ENCODE measurements at regions of chr11 and their contacts with region 1.

Region 1: DNA sequence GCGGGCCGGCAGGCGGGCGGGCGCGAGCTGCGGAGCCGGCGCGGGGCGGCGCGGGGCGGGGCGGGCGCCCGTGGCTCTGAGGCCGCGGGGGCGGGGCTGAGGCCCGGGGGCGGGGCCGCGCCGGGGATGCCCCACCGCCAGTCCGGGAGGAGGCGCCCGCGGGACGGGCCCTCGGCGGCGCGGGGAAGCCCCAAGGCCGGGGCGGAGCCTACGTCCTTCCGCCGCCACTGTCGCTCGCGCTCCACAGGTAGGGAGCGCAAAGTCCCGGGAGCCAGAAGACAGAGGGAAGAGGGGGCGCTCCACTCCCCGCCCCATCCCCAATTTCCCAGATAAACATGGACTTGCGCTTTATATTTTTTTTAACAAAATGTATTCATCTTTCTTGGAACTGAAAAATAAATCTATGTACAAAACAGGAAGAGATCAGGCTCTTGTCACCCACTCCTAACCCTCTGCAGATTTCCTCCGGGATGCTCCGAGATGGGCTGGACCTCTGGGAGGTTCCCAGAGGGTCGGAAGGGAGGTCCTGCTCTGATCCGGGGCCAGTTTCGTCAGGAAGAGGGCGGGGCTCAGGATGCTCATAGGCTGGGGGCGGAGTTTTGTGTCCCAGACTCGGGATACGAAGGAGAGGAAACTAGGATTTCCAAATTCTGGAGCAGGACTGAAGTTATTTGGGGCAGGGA is at the start of gene MAP4K2:
- DNase-seq: peak; percentile 77 to 85
- ATAC-seq: peak; percentile 80 to 89
- H3K4me3 ChIP-seq: peak within 1 kb of the TSS; percentile 61
- H3K27ac ChIP-seq: peak within 1 kb of the TSS; percentile 77 to 89
- H3K4me1 ChIP-seq: peaks cover 23% of the 10 kb centered on the region
- CTCF ChIP-seq: peak; percentile 34; the same call in 2 of the 3 replicates
- EP300 ChIP-seq: no peak
- POLR2A ChIP-seq: no peak
- RAD21 ChIP-seq: 0 out of 5 replicates have a peak, but pooled peaks of 1 of the 2 experiments have one; percentile 19
- polyA plus RNA-seq, gene MAP4K2: 9.4 and 10.2 TPM in 2 replicates

Region 2: DNA sequence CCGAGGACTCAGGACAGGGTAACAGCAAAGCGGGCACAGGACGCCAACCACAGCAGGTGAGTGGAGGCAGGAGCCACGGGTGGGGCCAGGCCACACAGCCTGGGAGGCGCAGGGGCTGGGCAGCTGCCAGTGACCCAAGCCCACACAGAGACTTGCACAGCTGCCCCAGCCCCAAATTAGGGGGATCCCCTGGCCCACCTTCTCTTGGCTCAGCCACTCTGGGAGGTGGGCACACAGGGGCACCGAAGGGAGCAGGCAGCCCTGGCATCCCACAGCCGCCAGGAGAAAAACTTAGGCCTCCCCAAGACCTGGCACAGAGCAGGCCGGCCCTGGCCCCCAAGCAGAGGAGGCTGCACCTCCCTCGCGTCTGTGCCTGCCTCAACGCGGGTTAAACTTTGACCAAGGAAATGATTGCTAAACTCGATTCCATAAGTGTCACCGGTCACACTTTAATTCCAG is 212.5 kb before region 1 on chr11 and contains the start of gene SLC22A12:
- CTCF ChIA-PET with region 1: no interaction called
- POLR2A ChIA-PET with region 1: no interaction called
- DNase-seq: no peak
- ATAC-seq: peak in 1 of 2 experiments; percentile 28; a peak in 2 of 6 replicates
- H3K4me3 ChIP-seq: no peak within 1 kb of the TSS
- H3K27ac ChIP-seq: no peak within 1 kb of the TSS
- H3K4me1 ChIP-seq: no peaks in the 10 kb centered on the region
- CTCF ChIP-seq: no peak
- EP300 ChIP-seq: no peak
- POLR2A ChIP-seq: no peak
- RAD21 ChIP-seq: no peak
- polyA plus RNA-seq, gene SLC22A12: not detected in 2 replicates

Region 3: DNA sequence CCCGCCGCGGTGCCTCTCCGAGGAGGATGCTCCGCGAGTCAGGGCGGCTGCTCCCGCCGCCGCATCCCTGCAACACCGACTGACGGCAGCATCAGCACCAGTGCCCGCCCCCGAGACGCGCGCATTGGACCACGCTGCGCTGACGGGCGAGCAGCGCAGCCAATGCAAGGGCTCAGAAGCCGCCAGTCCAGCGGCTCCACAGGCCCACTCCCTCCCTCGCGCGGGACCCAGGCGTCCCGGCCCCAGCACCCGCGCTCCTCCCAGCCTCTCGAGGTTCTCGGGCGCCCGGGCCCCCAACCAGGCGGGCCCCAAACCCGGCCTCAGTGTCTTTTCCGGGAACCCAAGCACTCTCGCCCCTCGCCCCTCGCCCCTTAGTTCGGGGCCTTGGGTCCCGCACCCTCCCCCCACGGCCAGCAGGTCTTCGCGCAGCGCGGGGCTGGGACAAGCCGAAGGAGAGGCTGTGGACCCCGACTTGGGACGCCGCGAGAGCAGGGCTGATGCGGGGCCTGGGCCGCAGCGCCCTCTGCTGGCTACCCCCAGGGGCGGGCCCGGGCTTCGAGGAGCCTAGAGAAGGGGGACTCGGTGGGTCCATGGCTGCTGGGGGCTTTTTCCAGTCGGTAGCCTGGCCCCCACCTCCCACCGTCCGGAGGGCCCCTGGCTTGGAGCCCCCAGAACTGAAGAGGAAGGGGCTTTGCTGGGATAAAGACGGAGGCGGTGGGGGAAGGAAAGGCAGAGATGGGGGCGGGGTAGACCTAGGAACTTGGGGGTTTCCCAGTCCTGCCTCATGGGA is 80.0 kb before region 1 on chr11 and contains the start of gene NRXN2:
- CTCF ChIA-PET with region 1: no interaction called
- POLR2A ChIA-PET with region 1: no interaction called
- DNase-seq: peak; percentile 88 to 98
- ATAC-seq: peak; percentile 90 to 98
- H3K4me3 ChIP-seq: peak within 1 kb of the TSS; percentile 94
- H3K27ac ChIP-seq: peak within 1 kb of the TSS; percentile 88 to 95
- H3K4me1 ChIP-seq: peaks cover 18% of the 10 kb centered on the region; the same call in 2 of the 3 replicates
- CTCF ChIP-seq: peak; percentile 96
- EP300 ChIP-seq: no peak
- POLR2A ChIP-seq: no peak
- RAD21 ChIP-seq: peak; percentile 54 to 75; a peak in 4 of 5 replicates
- polyA plus RNA-seq, gene NRXN2: not detected in 2 replicates

Region 4: DNA sequence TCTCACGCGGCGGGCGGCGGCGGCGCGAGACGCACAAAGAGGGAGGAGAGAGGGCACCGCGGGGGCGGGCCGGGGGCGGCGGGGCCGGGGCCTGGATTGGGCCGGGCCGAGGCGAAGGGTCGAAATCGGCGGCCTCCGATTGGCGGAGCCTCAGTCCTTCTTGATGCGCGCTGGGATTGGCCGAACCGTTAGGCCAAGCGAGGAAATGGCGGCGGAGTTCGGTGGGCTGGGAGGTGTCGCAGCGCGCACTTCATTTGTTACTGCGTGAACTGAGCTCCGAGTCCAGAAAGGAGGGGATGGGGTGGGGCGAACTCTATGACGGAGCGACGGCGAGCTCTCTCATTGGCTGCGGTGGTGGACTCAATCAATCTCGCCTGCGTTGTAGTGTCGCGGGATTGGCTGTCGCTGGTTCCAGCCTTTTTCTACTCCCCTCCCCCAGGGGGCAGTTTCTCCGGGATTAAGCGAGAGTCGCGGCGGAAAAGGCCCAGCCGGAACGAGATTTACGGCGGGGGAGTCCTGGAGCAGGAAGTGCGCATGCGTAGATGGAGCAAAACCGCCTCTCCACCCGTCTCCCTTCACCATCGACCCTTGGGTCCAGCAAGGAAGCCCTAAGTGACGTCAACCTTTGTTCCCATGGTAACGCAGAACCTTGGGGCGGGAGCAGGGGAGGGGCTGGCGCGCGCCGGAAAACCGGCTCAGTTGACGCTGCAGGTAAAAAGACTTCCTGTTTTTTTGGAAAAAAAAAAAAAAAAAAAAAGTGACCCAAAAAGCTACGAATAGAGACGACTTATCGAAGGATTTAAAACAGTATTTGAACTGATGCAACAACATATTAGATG is 24.6 kb before region 1 on chr11 and contains the start of gene SF1:
- CTCF ChIA-PET with region 1: interaction called, 79 read pairs
- POLR2A ChIA-PET with region 1: interaction called, 11 read pairs
- DNase-seq: peak; percentile 99 to 100
- ATAC-seq: peak; percentile 91 to 96
- H3K4me3 ChIP-seq: peak within 1 kb of the TSS; percentile 90
- H3K27ac ChIP-seq: peak within 1 kb of the TSS; percentile 98 to 99
- H3K4me1 ChIP-seq: peaks cover 32% of the 10 kb centered on the region
- CTCF ChIP-seq: no peak
- EP300 ChIP-seq: no peak
- POLR2A ChIP-seq: peak; percentile 61
- RAD21 ChIP-seq: no peak
- polyA plus RNA-seq, gene SF1: 88.8 and 104 TPM in 2 replicates

Region 5: GRCh38 chr11:64787526-64788320 is 15.6 kb before region 1 on chr11:
- CTCF ChIA-PET with region 1: interaction called, 79 read pairs
- POLR2A ChIA-PET with region 1: no interaction called
- DNase-seq: peak; percentile 72 to 89
- ATAC-seq: peak; percentile 74 to 93
- H3K4me3 ChIP-seq: no peak overlapping the region
- H3K27ac ChIP-seq: peak overlapping the region in 1 of 2 experiments; percentile 39; a peak in 1 of 6 replicates
- H3K4me1 ChIP-seq: no peaks in the 10 kb centered on the region
- CTCF ChIP-seq: peak; percentile 81
- EP300 ChIP-seq: no peak
- POLR2A ChIP-seq: no peak
- RAD21 ChIP-seq: peak; percentile 75 to 84

Region 6: DNA sequence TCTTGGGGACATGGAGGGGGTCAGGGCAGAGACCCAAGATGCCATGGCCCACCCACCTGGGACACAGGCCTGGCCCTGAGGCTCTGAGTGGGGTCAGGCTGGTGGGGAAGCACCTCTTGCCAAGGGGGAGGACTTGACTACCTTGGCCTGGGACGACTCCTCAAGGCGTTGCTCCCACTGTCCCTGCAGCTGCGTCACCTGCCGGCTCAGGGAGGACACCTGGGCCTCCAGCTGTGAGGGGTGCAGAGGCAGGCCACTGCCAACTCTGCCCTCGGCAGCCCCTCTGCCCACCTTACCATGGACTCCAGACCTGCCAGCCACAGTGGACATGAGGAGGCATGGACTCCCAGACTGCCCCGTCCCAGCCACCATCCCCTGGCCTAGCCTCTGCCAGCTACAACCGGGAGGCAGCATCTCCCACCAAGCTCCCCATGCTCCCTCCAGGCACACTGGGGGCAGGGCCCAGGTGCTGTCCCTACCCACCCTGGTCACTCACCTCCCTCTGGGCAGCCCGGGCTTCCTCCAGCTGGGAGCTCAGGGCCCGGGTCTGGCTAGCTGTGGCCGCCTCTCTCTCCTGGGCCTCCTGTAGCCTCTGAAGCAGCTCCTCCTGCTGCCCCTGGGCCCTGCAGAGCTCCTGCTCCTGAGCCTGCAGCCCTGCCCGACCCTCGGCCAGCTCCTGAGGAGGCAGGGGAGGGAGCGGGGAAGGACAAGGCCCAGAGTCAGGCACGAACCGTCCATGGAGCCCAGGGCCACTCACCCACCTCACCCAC is 32.5 kb after region 1 on chr11:
- CTCF ChIA-PET with region 1: no interaction called
- POLR2A ChIA-PET with region 1: no interaction called
- DNase-seq: no peak
- ATAC-seq: peak; percentile 16 to 27; a peak in 5 of 6 replicates
- H3K4me3 ChIP-seq: no peak overlapping the region
- H3K27ac ChIP-seq: peak overlapping the region; percentile 60 to 68; a peak in 4 of 6 replicates
- H3K4me1 ChIP-seq: peaks cover 17% of the 10 kb centered on the region
- CTCF ChIP-seq: no peak
- EP300 ChIP-seq: no peak
- POLR2A ChIP-seq: no peak
- RAD21 ChIP-seq: no peak